MCF 10A (cell line): ENCODE measurements at regions of chr17 and their contacts with region 1.

Region 1: DNA sequence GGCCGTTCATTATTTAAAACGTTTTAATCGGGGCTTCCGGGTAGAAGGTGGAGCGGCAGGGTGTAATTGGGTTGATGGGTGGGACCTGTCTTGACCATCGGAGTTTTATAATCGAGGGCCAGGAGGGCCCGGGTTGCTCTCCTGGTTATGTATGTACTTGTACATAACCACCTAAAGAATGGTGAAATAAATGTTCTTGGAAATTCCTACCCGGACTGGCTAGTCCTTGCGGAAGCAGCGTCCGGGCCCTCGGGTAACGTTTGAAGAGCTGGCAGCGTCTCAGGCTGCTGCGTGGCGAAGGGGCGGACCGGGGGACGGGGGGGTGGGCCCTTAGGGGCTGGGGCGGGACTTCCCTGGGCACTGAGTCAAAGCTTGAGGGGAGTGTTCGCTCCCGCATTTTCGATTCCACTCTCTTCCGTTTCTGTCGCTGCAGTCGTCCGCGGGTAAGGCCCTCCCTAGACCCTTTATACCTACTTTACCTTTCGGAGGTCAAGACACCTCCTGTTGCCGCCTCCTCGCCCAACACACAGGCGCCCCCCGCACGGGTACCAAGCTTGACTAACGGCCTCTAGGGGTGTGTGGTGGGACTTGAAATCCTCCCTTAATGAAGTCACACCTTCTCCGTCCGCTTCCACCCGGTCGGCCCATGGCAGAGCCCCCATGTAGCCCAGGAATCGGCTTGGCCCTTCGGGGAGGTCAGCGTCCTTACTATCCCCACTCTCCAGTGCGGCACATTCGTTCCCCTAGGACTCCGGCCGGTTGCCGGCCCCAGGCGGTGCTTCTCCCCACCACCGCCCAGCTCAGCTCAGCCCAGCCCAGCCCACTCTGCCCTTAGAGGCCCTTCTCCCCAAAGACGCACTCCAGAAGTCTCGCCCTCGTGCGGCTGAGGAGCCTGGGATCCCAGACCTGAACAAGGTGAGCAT is at the start of gene TMEM106A:
- DNase-seq: peak; percentile 76
- H3K4me3 Mint-ChIP-seq: peak within 1 kb of the TSS; percentile 69
- H3K27ac Mint-ChIP-seq: peak within 1 kb of the TSS; percentile 71
- H3K4me1 Mint-ChIP-seq: peaks cover 8% of the 10 kb centered on the region
- H3K27me3 Mint-ChIP-seq: no peaks in the 10 kb centered on the region
- CTCF ChIP-seq: no peak
- total RNA-seq, gene TMEM106A: 2.1 and 2.2 TPM in 2 replicates

Region 2: DNA sequence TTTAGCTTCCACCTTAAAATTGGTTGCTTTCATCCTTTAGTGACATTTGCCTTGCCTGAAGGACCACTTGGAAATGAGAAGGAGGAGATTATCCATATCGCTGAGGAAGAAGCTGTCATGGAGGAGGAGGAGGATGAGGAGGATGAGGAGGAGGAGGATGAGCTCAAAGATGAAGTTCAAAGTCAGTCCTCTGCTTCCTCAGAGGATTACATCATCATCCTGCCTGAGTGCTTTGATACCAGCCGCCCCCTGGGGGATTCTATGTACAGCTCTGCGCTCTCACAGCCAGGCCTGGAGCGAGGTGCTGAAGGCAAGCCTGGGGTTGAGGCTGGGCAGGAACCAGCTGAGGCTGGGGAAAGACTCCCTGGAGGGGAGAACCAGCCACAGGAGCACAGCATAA is 11.6 kb before region 1 on chr17:
- CTCF ChIA-PET with region 1: no interaction called
- POLR2A ChIA-PET with region 1: interaction called, 10 read pairs
- intact Hi-C with region 1: no loop called
- DNase-seq: no peak
- H3K4me3 Mint-ChIP-seq: no peak overlapping the region
- H3K27ac Mint-ChIP-seq: no peak overlapping the region
- H3K4me1 Mint-ChIP-seq: no peaks in the 10 kb centered on the region
- H3K27me3 Mint-ChIP-seq: no peaks in the 10 kb centered on the region
- CTCF ChIP-seq: no peak